ENCODE measurements at regions of chr1 and their contacts with region 1.

Region 1: DNA sequence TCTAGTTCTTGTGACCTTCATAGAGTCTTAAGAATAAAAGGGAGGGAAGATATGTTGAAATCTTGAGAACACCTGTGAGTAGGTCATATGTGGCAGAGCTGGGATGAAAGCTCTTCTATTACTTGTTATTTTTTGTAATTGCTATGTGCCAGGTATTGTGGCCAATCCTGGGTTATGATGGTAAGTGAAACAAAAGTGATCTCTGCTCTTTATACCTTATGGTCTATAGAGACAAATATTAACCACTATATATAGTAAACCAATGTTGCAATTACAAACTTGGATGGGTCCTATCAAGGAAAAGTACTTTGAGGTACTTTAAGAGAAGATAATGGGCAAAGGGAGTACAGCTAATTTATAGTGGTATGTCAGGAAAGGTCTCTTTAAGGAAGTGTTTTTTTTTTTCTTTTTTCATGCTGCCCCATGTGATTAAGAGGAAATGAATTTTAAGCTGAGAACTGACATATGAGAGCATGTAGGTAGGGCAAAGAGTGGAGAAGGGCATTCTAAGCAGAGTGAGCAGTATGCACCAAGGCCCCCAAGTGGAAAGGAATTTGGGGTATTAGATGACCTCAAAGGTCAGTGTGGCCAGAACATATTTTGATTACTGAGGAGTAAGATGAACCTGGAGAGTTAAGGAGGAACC is 43.3 kb downstream of the POU2F1 start:
- DNase-seq: no peak
- ATAC-seq: peak; percentile 47
- H3K4me3 ChIP-seq: no peak overlapping the region
- H3K27ac ChIP-seq: no peak overlapping the region
- H3K4me1 ChIP-seq: no peaks in the 10 kb centered on the region
- H3K27me3 ChIP-seq: no peaks in the 10 kb centered on the region
- CTCF ChIP-seq: no peak
- POLR2A ChIP-seq: no peak

Region 2: DNA sequence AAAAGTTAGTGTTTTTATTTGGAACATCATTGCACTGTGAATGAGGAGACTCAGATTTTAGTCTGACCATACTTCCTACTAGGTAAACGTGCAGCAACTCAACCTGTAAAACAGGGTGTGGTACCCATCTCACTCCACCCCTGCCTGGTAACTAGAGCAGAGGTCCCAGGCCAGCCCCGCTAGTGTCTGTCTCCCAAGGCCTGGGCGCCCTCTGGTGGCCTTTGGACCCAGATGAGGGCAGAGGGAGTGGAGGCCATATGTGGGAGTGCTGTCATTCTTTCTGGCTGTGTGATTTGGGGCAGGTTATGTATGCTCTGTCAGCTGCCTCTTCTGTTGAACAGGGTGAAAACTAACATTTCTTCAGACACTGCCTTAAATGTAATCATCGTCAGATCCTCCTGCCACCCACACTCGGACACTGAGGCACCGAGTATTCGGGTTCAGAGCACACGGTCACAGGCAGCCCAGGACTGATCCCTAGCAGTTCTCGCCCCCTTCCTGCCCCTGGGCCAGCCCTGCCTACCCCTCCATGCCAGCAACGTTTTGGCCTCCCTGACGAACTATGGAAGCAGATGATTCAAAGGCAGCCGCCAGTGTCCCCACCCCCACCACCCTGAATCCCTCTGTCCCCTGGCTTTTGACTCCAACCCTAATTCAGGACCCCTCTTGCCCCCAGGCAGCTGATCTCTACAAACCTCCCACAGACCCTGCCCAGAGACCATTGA is 178.3 kb after region 1 on chr1:
- intact Hi-C with region 1: loop called (anchors 5 kb)
- DNase-seq: peak; percentile 83 to 89 (median 84)
- ATAC-seq: peak; percentile 83
- H3K4me3 ChIP-seq: no peak overlapping the region
- H3K27ac ChIP-seq: no peak overlapping the region
- H3K4me1 ChIP-seq: peaks cover 9% of the 10 kb centered on the region
- H3K27me3 ChIP-seq: no peaks in the 10 kb centered on the region
- CTCF ChIP-seq: peak; percentile 81 to 87 (median 84)
- POLR2A ChIP-seq: no peak

Region 3: GRCh38 chr1:167533851-167534300 is 269.9 kb after region 1 on chr1:
- intact Hi-C with region 1: loop called (anchors 10 kb)
- DNase-seq: peak; percentile 71 to 75 (median 73)
- ATAC-seq: peak; percentile 81
- H3K4me3 ChIP-seq: no peak overlapping the region
- H3K27ac ChIP-seq: no peak overlapping the region
- H3K4me1 ChIP-seq: no peaks in the 10 kb centered on the region
- H3K27me3 ChIP-seq: no peaks in the 10 kb centered on the region
- CTCF ChIP-seq: peak; percentile 76 to 86 (median 79)
- POLR2A ChIP-seq: no peak

Measured in body of pancreas (tissue), 4 donors.